ENCODE measurements at regions of chr9 and their contacts with region 1.

Region 1: DNA sequence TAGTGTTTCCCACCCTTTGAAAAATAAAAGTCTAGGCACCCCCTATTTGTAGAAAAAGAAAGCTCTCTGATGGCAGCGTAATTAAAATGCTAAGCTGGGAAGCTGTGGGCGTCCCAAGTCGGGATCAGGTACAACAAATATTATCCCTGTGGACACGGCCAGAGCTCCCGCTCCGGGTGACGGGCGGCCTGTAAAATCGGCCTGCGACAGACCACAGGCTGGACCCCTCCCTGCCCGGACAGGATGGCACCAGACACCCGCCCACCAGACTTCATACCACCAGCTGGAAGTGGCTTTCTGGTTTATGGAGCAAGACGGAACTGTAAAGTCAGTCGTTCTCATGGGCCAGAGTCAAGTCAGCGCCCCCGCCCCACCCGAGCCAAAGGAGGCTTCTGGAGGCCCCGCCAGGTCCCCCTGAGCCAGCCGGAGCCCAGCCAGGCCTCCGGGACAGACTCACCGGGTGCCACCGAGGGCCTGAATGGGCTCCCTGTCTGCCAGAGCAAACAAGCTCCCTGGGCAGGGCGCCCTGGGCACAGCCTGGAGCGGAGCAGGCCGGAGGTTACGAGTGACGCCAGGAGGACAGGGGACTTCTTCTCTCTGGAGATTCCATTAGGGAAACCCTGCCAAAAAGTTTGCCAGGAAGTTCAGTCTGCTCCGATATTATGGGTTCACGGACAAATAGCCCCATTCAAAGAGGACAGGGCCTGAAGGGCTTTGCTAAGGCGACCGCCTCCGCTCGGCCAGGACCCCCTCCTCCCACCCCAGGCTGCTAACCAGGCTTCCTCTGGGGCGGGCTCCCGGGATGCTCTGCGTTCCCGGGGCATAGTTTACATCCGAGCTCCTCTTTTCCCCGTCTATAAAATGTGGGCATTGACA is 173.7 kb downstream of the ERCC6L2 start:
- DNase-seq: peak; percentile 86 to 98
- H3K4me3 ChIP-seq: peak overlapping the region; percentile 33 to 44
- H3K27ac ChIP-seq: peak overlapping the region; percentile 89 to 92
- H3K4me1 ChIP-seq: peaks cover 0 to 29% (median 26%) of the 10 kb centered on the region in 4 donors
- H3K27me3 ChIP-seq: no peaks in the 10 kb centered on the region
- CTCF ChIP-seq: no peak

Region 2: DNA sequence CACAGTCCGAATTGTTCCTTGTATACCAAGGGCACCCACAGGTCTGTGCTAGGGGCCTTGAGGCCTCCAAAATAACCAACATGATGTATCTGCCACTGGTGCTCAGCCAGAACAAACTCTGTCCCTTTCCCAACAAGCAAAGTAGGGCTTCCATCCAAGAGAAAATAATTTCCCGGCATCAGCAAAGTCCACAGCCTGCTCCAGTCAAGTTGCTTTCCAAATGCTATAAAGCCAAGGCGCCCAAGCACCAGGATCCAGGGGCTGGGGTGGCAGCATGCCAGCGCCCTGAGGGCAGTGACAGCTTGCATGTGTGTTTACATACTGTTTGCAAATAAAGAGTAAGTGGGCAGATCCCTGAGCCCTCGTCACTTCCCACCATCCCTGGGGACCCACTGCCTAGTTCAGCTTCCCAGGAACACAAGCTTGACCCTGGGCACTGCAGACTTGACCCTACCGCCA is 17.8 kb before region 1 on chr9:
- intact Hi-C with region 1: loop called (anchors 1 kb)
- DNase-seq: peak; percentile 83 to 97
- H3K4me3 ChIP-seq: no peak overlapping the region
- H3K27ac ChIP-seq: peak overlapping the region; percentile 66 to 78
- H3K4me1 ChIP-seq: peaks cover 4 to 53% (median 40%) of the 10 kb centered on the region in 4 donors
- H3K27me3 ChIP-seq: no peaks in the 10 kb centered on the region
- CTCF ChIP-seq: no peak